Activated T-helper 1 cell treated with anti-CD3 and anti-CD28 coated beads, Interleukin-12 subunit alpha, Interleukin-12 subunit beta, Interleukin-2, Interleukin-4 antibody, amounts not matched to agents 30 ng/mL and 10 ng/mL and 1 ng/mL, durations not matched to agents 14 hours and 24 hours and 36 hours (primary cell): ENCODE measurements at regions of chr11 and their contacts with region 1.

Region 1: GRCh38 chr11:70202898-70203748 is at the start of gene FADD:
- DNase-seq: peak; percentile 89
- H3K4me3 Mint-ChIP-seq: peak within 1 kb of the TSS; percentile 99
- H3K27ac Mint-ChIP-seq: peak within 1 kb of the TSS; percentile 99
- H3K4me1 Mint-ChIP-seq: peaks cover 37% of the 10 kb centered on the region
- H3K27me3 Mint-ChIP-seq: peaks cover 9% of the 10 kb centered on the region
- total RNA-seq, gene FADD: 47.9 and 51.8 TPM in 2 replicates

Region 2: DNA sequence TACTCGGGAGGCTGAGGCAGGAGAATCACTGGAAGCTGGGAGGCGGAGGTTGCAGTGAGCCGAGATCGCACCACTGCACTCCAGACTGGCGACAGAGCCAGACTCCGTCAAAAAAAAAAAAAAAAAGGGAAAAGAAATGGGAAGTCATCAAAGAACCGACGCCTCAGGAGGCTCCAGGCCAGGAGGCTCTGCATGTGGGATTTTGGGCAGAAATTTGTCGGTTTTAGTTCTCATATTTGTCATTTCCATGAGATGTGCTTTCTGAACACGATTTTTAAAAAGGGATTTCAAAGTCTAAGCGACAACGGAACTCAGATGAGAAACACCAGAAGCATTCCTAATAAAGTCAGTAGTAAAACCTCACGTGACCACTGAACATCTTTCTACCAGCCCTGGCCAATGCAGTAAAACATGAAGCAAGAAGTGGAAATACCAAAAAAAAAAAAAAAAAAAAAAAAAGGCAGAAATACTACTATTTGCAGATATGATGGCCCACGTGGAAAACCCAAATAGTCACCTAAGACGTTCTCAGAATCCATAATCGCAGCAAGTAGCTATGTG is 527.2 kb before region 1 on chr11:
- intact Hi-C with region 1: loop called (anchors 1 kb)
- DNase-seq: no peak
- H3K4me3 Mint-ChIP-seq: peak overlapping the region; percentile 97
- H3K27ac Mint-ChIP-seq: no peak overlapping the region
- H3K4me1 Mint-ChIP-seq: peaks cover 20% of the 10 kb centered on the region
- H3K27me3 Mint-ChIP-seq: peaks cover 7% of the 10 kb centered on the region

Region 3: GRCh38 chr11:69808667-69809086 is 394.4 kb before region 1 on chr11:
- intact Hi-C with region 1: no loop called
- DNase-seq: no peak
- H3K4me3 Mint-ChIP-seq: no peak overlapping the region
- H3K27ac Mint-ChIP-seq: no peak overlapping the region
- H3K4me1 Mint-ChIP-seq: no peaks in the 10 kb centered on the region
- H3K27me3 Mint-ChIP-seq: peaks cover 5% of the 10 kb centered on the region

Region 4: DNA sequence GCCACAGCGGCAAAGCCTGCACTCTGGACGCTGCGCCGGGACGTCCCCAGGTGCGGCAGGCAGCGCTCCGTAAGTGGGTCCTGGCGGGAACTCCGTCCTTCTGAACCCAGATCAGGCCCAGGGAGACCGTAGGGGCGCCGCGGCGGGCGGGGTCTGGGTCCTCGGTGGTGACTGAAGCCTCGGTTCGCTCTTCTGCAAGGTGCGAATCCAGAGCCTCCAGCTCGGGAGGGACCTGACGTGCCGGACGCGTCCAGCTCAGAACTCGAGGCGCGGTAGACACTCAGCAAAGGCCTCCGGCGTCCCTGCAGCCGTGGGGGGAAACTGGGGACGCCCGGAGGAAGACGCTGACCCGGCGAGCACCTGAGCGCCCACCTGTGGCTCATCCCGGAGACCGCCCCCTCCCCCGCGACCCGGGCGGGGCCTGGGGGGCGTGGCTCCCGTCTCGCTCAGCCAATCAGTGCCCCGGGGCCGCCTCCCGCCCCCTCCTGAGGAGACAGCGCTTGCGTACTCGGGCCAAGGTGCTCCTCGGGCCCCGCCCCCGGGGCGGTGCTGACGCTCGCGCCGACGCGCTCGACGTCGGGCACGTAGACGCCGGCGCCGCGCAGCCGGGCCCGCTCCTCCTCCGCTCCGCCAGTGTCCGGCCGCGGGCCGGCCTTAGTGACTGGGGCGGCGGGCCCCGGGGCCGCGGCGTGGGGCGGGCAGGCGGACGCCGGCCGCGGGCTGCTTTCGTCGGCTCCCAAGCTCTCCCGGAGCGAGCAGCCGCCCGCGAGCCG is 67.2 kb after region 1 on chr11 and contains the start of gene PPFIA1:
- intact Hi-C with region 1: loop called (anchors 1 kb)
- DNase-seq: peak; percentile 95
- H3K4me3 Mint-ChIP-seq: peak within 1 kb of the TSS; percentile 94
- H3K27ac Mint-ChIP-seq: peak within 1 kb of the TSS; percentile 89
- H3K4me1 Mint-ChIP-seq: peaks cover 52% of the 10 kb centered on the region
- H3K27me3 Mint-ChIP-seq: peaks cover 21% of the 10 kb centered on the region
- total RNA-seq, gene PPFIA1: 56.8 and 60.3 TPM in 2 replicates

Region 5: GRCh38 chr11:70397983-70398833 is 195.1 kb after region 1 on chr11 and contains the start of gene CTTN:
- intact Hi-C with region 1: loop called (anchors 2 kb)
- DNase-seq: peak; percentile 42
- H3K4me3 Mint-ChIP-seq: peak within 1 kb of the TSS; percentile 87
- H3K27ac Mint-ChIP-seq: peak within 1 kb of the TSS; percentile 77
- H3K4me1 Mint-ChIP-seq: peaks cover 24% of the 10 kb centered on the region
- H3K27me3 Mint-ChIP-seq: peaks cover 58% of the 10 kb centered on the region
- total RNA-seq, gene CTTN: 51.4 and 53.7 TPM in 2 replicates

Region 6: GRCh38 chr11:70618431-70619101 is 415.4 kb after region 1 on chr11:
- intact Hi-C with region 1: no loop called
- DNase-seq: no peak
- H3K4me3 Mint-ChIP-seq: no peak overlapping the region
- H3K27ac Mint-ChIP-seq: no peak overlapping the region
- H3K4me1 Mint-ChIP-seq: no peaks in the 10 kb centered on the region
- H3K27me3 Mint-ChIP-seq: no peaks in the 10 kb centered on the region

Region 7: DNA sequence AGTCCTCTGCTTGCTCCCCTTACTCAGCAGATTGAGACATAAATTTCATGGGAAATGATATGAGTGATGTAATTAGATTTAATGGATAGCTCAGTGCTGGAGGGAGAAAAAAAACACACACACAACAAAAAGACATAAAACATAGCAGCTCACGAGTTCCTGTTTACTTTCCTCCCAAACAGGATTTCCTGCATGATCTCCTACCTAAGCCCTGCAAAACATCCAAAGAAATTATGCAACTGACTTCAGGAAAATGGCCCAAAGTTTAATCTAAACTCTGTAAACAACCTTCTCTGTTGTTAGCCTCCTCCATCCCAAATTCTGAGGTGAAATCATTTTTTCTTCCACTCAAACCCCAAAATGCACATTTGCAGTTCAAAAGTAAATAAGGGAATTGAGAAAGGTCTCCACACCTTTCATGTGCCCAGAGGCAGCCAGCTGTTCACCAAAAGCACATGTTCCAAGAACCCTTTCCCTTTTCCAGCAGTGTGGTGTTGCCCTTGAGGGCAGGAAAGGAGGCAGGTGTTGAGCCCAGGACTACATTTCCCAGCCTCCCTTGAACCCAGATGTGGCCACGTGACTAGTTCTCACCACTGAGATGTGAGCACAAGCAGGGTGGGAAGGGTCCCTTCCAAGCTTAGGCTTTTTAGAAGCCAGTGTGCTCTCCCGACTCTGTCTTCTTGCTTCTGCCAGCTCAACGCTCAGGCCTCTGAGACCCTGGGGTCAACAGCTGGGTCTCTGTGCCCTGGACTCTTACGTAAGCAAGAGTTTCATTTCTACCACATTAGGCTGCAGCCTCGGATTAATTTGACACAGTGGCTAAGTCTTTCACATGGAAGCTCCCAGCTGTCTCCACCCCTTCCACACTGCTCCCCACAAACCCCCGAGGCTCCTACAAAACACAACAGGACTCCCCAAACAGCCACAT is 496.4 kb after region 1 on chr11:
- intact Hi-C with region 1: no loop called
- DNase-seq: no peak
- H3K4me3 Mint-ChIP-seq: no peak overlapping the region
- H3K27ac Mint-ChIP-seq: no peak overlapping the region
- H3K4me1 Mint-ChIP-seq: no peaks in the 10 kb centered on the region
- H3K27me3 Mint-ChIP-seq: peaks cover 2% of the 10 kb centered on the region